AG04450 (cell line): ENCODE measurements at regions of chr22 and their contacts with region 1.

Region 1: DNA sequence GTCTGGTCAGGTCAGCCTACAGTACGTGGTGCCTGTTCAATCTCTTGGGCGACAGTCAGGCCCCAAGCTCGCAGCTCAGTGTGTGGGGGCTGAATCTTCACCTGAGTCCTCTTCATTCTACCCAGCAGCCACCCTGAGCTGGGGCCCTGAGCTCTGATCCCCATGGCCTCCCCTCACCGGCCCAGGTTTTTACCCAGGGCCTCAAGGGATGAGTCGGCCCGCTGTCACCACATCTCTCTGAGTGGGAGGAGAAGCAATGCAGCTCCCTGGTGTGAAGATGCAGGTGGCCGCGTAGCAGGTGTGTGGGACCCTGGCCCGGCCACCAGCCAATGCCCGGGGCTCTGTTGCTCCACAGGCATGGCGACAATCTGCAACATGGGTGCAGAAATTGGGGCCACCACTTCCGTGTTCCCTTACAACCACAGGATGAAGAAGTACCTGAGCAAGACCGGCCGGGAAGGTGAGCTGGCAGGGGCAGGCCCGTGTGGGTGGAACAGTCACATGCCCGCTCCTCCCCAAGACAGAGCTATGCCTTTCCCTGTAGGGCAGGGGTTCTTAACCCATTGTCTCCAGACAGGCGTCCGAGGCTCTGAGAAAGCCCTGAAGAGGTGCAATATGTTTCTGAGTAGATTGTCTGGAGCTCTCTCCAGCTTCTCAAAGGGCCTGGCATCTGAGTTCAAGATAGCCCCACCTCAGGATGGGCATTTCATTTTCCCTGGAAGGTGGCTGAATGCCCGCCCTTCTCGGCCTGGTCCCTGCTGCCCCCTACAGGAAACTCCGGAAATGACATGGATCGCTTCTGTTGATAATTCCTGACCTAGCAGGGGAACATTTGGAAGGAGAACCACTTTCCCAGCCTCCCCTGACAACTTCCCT is 26.9 kb downstream of the POLR3H start:
- DNase-seq: no peak
- H3K4me3 ChIP-seq: no peak overlapping the region
- H3K27ac ChIP-seq: no peak overlapping the region
- H3K27me3 ChIP-seq: no peaks in the 10 kb centered on the region
- CTCF ChIP-seq: peak; percentile 93

Region 2: GRCh38 chr22:41411021-41411851 is 106.2 kb before region 1 on chr22:
- CTCF ChIA-PET with region 1: interaction called, 12 read pairs
- POLR2A ChIA-PET with region 1: no interaction called
- DNase-seq: no peak
- H3K4me3 ChIP-seq: no peak overlapping the region
- H3K27ac ChIP-seq: no peak overlapping the region
- H3K27me3 ChIP-seq: no peaks in the 10 kb centered on the region
- CTCF ChIP-seq: no peak

Region 3: DNA sequence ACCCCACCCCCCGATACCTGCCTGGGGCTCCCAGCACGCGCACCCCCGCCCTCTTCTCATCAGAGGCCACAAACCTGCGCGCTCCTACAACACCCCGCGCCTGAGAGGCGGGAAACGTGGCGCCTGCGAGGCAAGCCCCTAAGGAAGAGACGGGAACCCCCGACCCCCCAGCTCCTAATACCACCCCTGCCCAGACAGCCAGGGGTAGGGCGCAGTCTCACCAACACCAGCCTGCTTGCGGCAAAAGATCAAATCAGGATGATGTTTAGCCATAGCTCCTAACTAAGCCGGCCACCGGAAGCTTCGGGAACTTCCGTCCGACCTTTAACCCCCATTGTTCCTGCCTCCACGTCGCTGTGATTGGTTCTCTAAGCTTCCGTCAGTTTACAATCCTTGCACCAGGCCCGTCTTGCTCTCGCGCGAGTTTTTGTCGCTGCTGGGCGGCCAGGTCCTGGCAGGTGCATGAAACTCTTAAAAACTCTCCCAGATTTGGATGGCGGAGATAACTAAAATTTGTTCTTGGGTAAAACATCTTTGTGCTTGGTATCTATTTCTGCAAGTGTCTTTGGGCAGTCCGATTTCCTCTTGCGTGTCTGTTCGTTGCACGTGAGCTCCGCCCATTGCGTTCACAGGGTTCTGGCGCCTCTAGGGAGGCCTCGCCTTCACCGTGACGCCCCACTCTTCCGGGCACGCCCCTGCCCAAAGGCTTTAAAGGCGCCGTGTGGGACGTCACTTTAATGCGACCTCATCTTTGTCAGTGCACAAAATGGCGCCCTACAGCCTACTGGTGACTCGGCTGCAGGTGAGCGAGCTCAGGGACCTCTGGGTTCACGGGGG is 48.8 kb before region 1 on chr22 and contains the starts of genes ACO2 and PHF5A:
- CTCF ChIA-PET with region 1: interaction called, 15 read pairs
- POLR2A ChIA-PET with region 1: no interaction called
- DNase-seq: peak; percentile 93
- H3K4me3 ChIP-seq: peak within 1 kb of the TSS; percentile 98
- H3K27ac ChIP-seq: peak within 1 kb of the TSS; percentile 86
- H3K27me3 ChIP-seq: no peaks in the 10 kb centered on the region
- CTCF ChIP-seq: no peak
- polyA plus RNA-seq, gene ACO2: 32.2 and 44.4 TPM in 2 replicates
- polyA plus RNA-seq, gene PHF5A: 47.9 and 53.8 TPM in 2 replicates

Region 4: GRCh38 chr22:41479671-41480396 is 37.6 kb before region 1 on chr22:
- CTCF ChIA-PET with region 1: interaction called, 40 read pairs
- POLR2A ChIA-PET with region 1: interaction called, 4 read pairs
- DNase-seq: no peak
- H3K4me3 ChIP-seq: peak overlapping the region; percentile 23
- H3K27ac ChIP-seq: peak overlapping the region; percentile 94
- H3K27me3 ChIP-seq: no peaks in the 10 kb centered on the region
- CTCF ChIP-seq: peak; percentile 18; the same call in 1 of the 2 replicates

Region 5: DNA sequence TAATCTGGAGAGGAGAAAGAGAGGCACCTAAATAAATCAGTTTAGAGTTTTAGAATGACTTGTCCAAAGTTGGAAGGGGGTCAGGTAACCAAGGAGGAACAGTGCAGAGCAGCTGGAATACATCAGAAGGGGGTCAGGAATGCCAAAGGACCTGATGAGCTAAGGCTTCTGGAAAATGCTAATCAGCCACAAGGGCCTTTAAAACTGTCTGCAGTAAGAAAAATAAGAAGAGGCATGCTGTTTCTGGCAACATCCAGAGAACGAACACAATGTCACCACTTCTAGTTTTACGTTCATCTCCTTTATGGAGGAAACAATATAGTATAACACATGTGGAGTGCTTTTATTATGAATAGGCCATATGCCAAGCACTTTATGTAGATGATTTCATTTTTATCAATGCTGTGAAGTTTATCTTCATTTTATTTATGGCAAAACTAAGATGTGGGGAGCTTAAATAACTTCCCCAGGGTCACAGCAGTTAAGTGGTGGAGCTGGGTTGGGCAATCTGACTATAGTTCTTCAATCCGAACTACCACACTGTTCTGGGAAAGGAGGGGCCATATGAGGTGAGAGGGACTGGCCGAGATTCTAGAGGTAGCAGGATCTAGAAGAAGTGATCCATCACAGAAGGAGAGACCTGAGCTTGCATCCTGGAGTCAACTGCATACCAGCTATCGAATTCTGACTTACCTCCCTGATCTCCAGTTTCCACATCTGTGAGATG is 25.9 kb before region 1 on chr22:
- CTCF ChIA-PET with region 1: interaction called, 16 read pairs
- POLR2A ChIA-PET with region 1: no interaction called
- DNase-seq: no peak
- H3K4me3 ChIP-seq: no peak overlapping the region
- H3K27ac ChIP-seq: no peak overlapping the region
- H3K27me3 ChIP-seq: no peaks in the 10 kb centered on the region
- CTCF ChIP-seq: no peak

Region 6: GRCh38 chr22:41504397-41504796 is 13.0 kb before region 1 on chr22:
- CTCF ChIA-PET with region 1: interaction called, 22 read pairs
- POLR2A ChIA-PET with region 1: no interaction called
- DNase-seq: no peak
- H3K4me3 ChIP-seq: no peak overlapping the region
- H3K27ac ChIP-seq: no peak overlapping the region
- H3K27me3 ChIP-seq: no peaks in the 10 kb centered on the region
- CTCF ChIP-seq: no peak

Region 7: DNA sequence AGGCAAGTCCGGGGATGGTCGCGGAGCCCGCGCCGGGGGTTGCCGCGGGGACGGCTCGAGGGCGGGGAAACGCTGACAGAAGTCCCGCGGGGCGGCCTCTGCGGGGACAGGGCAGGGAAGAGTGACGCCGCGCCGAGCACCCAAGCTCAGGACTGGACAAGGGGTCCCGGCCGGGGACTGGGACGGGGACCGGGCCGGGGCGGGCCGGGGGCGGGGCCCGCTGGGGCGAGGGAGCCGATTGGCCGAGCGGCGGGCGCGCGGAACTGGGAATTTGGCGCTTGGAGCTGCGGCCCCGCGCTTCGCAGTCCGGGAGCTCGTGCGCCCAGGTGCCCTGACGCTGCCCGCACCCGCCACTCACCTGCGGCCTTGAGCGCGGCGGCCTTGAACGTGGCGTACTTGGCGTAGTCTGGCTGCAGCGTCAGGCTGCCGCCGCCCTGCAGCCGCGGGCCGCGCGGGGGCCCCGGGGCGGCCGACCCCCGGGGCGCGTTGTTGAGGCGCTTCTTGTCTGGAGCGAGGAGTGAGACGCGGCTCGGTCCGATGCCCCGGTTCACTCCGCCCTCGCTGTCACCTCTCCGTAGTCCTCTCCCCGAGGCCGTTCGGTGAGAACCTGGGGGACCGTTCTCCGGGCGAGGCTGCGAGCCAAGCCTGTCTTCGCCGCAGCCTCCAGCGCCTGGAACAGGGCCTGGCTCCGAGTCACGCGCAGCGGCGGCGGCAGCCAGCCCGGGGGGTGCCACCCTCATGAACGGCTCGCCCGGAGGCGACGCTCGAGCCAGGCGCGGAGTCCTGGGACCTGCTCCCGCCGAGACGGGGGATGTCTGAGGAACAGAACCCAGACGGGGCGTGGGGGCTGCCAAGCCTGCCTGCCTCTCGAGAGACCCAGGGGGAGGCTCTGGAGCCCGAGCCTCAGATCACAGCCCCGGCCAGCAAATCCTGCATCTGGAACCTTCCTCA is 392.9 kb after region 1 on chr22:
- CTCF ChIA-PET with region 1: no interaction called
- POLR2A ChIA-PET with region 1: no interaction called
- DNase-seq: no peak
- H3K4me3 ChIP-seq: no peak overlapping the region
- H3K27ac ChIP-seq: no peak overlapping the region
- H3K27me3 ChIP-seq: peaks cover 49% of the 10 kb centered on the region
- CTCF ChIP-seq: no peak